ENCODE measurements at regions of chr3 and their contacts with region 1.

Region 1: GRCh38 chr3:185929192-185930151 is 8.3 kb downstream of the TRA2B start:
- DNase-seq: no peak
- H3K4me3 ChIP-seq: no peak overlapping the region
- CTCF ChIP-seq: no peak

Region 2: GRCh38 chr3:185912929-185913901 is 16.3 kb before region 1 on chr3:
- CTCF ChIA-PET with region 1: interaction called, 12 read pairs
- POLR2A ChIA-PET with region 1: interaction called, 4 read pairs
- DNase-seq: no peak
- H3K4me3 ChIP-seq: no peak overlapping the region
- CTCF ChIP-seq: no peak

Region 3: DNA sequence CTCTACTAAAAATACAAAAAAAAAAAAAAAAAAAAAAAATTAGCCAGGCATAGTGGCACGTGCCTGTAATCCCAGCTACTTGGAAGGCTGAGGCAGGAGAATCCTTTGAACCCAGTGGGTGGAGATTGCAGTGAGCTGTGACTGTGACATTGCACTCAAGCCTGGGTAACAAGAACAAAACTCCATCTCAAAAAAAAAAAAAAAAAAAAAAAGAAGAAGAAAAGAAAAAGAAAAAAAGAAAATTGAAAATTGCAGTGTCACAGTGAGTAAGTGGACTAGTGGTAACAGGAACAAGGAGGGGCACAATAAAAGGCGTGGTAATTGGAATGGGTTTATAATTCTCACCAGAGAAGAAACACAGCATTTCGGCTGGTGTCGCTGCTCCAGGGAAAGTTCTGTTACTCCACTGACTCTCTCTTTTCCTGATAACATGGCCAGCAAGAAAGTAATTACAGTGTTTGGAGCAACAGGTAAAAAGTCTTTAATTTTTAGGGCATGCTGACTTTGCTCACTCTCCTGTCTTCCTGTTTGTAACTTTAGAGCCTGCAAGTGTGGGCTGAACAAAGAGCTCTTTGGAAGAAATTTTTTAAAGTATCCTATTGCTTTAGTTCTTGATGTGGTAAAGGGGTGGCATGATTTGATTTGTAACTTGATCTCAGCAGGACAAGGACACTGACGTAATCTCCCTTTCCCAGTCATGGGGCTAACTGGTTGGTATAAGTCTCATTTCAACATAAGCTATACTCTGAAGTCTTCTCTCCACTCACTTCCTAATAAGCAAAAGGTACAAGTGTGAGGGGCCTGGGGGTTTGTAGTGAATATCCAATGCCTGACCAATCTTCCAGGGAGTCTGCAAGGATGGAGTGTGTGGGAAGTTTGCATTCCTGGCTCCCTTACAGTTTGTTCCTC is 30.4 kb after region 1 on chr3:
- CTCF ChIA-PET with region 1: no interaction called
- POLR2A ChIA-PET with region 1: no interaction called
- DNase-seq: peak; percentile 41
- H3K4me3 ChIP-seq: no peak overlapping the region
- CTCF ChIP-seq: no peak

Region 4: DNA sequence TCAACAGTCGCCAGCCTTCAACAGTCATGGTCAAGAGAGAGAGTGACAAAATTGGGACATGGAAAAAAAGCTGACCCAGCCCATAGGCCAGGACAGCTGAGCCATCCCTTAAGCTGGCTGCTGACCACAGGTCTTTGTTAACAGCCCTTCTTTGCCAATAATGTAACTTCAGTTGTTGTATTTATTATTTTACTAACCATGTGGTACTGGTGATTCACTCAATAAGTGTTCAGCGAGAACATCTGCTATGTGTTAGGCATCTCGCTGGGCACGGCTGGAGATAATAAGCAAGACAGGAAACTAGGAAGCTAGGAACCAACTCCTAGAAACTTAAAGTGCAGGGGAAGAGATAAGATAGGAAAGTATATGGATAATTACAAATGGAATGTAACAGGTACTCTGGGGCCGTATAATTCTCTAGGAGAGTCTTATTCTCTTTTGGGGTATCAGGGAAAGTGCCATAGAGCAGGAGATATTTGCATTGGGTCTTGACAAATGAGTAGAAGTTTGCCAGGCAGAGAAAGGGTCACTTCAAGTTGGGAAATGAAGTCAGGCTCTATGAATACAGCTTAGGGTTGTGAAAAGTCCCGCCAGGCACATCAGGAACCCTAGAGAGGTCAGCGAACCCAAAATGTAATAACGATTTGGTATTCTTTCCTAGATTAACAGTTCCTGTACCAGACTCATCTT is 92.3 kb after region 1 on chr3:
- CTCF ChIA-PET with region 1: no interaction called
- POLR2A ChIA-PET with region 1: no interaction called
- DNase-seq: peak; percentile 82
- H3K4me3 ChIP-seq: no peak overlapping the region
- CTCF ChIP-seq: no peak

Measured in AG04449 (cell line).